Activated CD8-positive, alpha-beta memory T cell treated with anti-CD3 and anti-CD28 coated beads, Interleukin-2, amount 10 ng/mL, durations not matched to agents 7 days and 5 days (primary cell): ENCODE measurements at regions of chr1 and their contacts with region 1.

Region 1: DNA sequence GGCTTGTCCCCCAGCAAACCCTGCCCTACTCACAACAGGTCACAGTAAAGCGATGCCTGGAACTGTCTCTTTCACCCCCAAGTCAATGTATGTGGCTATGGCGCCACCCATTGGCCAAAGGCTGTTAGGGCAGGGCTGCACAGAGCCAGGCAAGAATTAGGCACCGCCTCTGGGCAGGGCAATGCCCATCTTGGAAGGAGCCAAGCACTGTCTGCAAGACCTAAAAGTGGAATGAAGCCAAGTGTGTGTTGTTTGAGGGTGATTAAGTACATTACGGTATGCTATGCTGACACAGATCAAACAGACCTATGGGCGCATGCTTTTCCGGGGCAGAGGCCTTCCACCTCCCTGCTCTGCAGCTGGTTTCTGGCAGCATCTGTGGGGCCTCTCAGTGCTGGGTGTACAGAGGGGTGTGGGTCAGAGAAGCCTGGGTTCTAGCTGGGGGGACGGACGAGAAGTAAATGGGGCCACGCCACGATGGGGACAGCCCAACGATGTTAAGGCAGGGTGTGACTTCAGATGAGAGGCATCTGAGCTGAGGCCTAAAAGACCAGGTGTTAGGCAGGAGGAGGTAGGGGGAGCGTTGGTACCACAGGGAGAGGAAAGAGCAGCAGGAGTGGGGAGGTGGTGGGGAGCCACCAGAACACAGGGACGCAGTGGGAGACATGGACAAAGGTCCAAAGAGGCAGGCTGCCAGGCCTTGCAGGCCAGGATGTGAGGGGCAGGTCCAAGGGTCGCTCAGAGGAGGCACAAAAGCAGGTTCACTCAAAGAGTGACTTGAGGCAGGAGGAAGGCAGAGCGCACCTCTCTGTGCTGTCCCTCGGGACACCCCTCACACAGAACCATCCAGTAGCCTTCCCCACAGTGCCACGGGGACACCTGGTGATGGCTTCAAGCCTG is 49.8 kb downstream of the ACOT7 start:
- DNase-seq: peak; percentile 78
- ATAC-seq: peak; percentile 60
- H3K4me3 Mint-ChIP-seq: no peak overlapping the region
- H3K27ac Mint-ChIP-seq: no peak overlapping the region
- H3K4me1 Mint-ChIP-seq: peaks cover 10% of the 10 kb centered on the region
- H3K27me3 Mint-ChIP-seq: no peaks in the 10 kb centered on the region

Region 2: GRCh38 chr1:6359216-6360116 is 15.7 kb after region 1 on chr1:
- CTCF ChIA-PET with region 1: interaction called, 90 read pairs
- DNase-seq: peak; percentile 81
- ATAC-seq: peak; percentile 81
- H3K4me3 Mint-ChIP-seq: peak overlapping the region; percentile 53
- H3K27ac Mint-ChIP-seq: peak overlapping the region; percentile 91
- H3K4me1 Mint-ChIP-seq: peaks cover 36% of the 10 kb centered on the region
- H3K27me3 Mint-ChIP-seq: no peaks in the 10 kb centered on the region

Region 3: GRCh38 chr1:6393400-6394187 is 49.8 kb after region 1 on chr1 and contains the start of gene ACOT7:
- CTCF ChIA-PET with region 1: interaction called, 58 read pairs
- DNase-seq: peak; percentile 93
- ATAC-seq: peak; percentile 89
- H3K4me3 Mint-ChIP-seq: peak within 1 kb of the TSS; percentile 84
- H3K27ac Mint-ChIP-seq: peak within 1 kb of the TSS; percentile 92
- H3K4me1 Mint-ChIP-seq: peaks cover 35% of the 10 kb centered on the region
- H3K27me3 Mint-ChIP-seq: no peaks in the 10 kb centered on the region
- total RNA-seq, gene ACOT7: 81.3 to 87.0 TPM

Region 4: GRCh38 chr1:6401673-6402072 is 57.9 kb after region 1 on chr1:
- CTCF ChIA-PET with region 1: interaction called, 62 read pairs
- DNase-seq: no peak
- ATAC-seq: no peak
- H3K4me3 Mint-ChIP-seq: no peak overlapping the region
- H3K27ac Mint-ChIP-seq: no peak overlapping the region
- H3K4me1 Mint-ChIP-seq: no peaks in the 10 kb centered on the region
- H3K27me3 Mint-ChIP-seq: peaks cover 26% of the 10 kb centered on the region

Region 5: GRCh38 chr1:6423321-6423999 is 79.7 kb after region 1 on chr1:
- CTCF ChIA-PET with region 1: interaction called, 10 read pairs
- DNase-seq: peak; percentile 73
- ATAC-seq: peak; percentile 70
- H3K4me3 Mint-ChIP-seq: no peak overlapping the region
- H3K27ac Mint-ChIP-seq: no peak overlapping the region
- H3K4me1 Mint-ChIP-seq: peaks cover 17% of the 10 kb centered on the region
- H3K27me3 Mint-ChIP-seq: peaks cover 68% of the 10 kb centered on the region

Region 6: GRCh38 chr1:6438047-6438525 is 94.3 kb after region 1 on chr1:
- CTCF ChIA-PET with region 1: interaction called, 26 read pairs
- DNase-seq: peak; percentile 83
- ATAC-seq: peak; percentile 62
- H3K4me3 Mint-ChIP-seq: no peak overlapping the region
- H3K27ac Mint-ChIP-seq: no peak overlapping the region
- H3K4me1 Mint-ChIP-seq: peaks cover 3% of the 10 kb centered on the region
- H3K27me3 Mint-ChIP-seq: peaks cover 34% of the 10 kb centered on the region